A549 (cell line): ENCODE measurements at regions of chr11 and their contacts with region 1.

Region 1: GRCh38 chr11:116499396-116500003 is 273.3 kb downstream of the BUD13 start:
- DNase-seq: peak; percentile 27 to 66
- ATAC-seq: peak; percentile 68 to 95; a peak in 4 of 6 replicates
- H3K4me3 ChIP-seq: no peak overlapping the region
- H3K27ac ChIP-seq: no peak overlapping the region
- H3K4me1 ChIP-seq: no peaks in the 10 kb centered on the region
- CTCF ChIP-seq: peak; percentile 38
- EP300 ChIP-seq: no peak
- POLR2A ChIP-seq: no peak
- RAD21 ChIP-seq: peak; percentile 47 to 52

Region 2: GRCh38 chr11:116379185-116379828 is 120.2 kb before region 1 on chr11:
- CTCF ChIA-PET with region 1: no interaction called
- POLR2A ChIA-PET with region 1: no interaction called
- DNase-seq: no peak
- ATAC-seq: no peak
- H3K4me3 ChIP-seq: no peak overlapping the region
- H3K27ac ChIP-seq: no peak overlapping the region
- H3K4me1 ChIP-seq: no peaks in the 10 kb centered on the region
- CTCF ChIP-seq: no peak
- EP300 ChIP-seq: no peak
- POLR2A ChIP-seq: no peak
- RAD21 ChIP-seq: no peak

Region 3: GRCh38 chr11:116510886-116511650 is 11.6 kb after region 1 on chr11:
- CTCF ChIA-PET with region 1: interaction called, 11 read pairs
- POLR2A ChIA-PET with region 1: no interaction called
- DNase-seq: no peak
- ATAC-seq: no peak
- H3K4me3 ChIP-seq: no peak overlapping the region
- H3K27ac ChIP-seq: no peak overlapping the region
- H3K4me1 ChIP-seq: no peaks in the 10 kb centered on the region
- CTCF ChIP-seq: no peak
- EP300 ChIP-seq: no peak
- POLR2A ChIP-seq: no peak
- RAD21 ChIP-seq: no peak

Region 4: GRCh38 chr11:116579031-116579653 is 79.6 kb after region 1 on chr11:
- CTCF ChIA-PET with region 1: no interaction called
- POLR2A ChIA-PET with region 1: no interaction called
- DNase-seq: no peak
- ATAC-seq: no peak
- H3K4me3 ChIP-seq: no peak overlapping the region
- H3K27ac ChIP-seq: no peak overlapping the region
- H3K4me1 ChIP-seq: no peaks in the 10 kb centered on the region
- CTCF ChIP-seq: no peak
- EP300 ChIP-seq: no peak
- POLR2A ChIP-seq: no peak
- RAD21 ChIP-seq: no peak